ENCODE measurements at regions of chr3 and their contacts with region 1.

Region 1: DNA sequence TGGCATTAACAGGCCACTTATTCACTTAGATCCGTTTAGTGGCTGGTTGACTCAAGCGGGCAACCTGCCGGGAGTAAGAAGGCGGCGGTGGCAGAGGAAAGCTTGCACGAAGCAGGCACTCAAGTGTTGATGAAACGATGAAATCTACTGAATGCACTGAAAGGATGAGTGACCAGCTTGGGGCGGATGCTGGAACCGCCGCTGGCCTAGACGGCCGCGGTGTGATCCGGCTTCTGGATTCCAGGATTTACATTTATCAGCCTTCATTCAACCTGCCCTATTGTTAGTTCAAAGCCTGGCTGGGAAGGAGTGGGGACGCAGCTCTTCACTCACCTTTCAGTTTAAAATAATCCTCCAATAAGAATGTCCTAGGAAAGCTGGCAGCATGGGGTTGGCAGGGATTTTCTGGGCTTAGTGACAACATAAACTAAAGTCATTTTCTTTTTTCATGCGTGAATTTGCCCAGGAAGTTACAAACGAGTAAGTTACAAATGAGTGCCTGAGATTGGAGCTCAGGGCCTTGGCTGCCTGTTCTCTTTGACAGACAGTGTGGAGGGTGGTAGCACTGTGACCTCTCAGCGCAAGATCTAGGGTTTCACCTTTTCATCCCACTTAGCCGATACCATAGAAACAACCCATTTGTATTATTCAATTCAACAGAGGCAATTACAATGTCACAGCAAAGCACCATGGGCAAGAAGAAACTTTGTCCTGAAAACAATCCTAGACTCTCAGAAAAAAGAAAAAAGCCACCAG is 1.1 kb upstream of the PLCH1 start:
- DNase-seq: peak in 1 of 35 experiments; percentile 6
- ATAC-seq: peak in 1 of 4 experiments; percentile 31
- H3K4me3 ChIP-seq: no peak overlapping the region
- H3K4me3 Mint-ChIP-seq: peak overlapping the region; percentile 62 to 97 (median 86)
- H3K27ac ChIP-seq: no peak overlapping the region
- H3K27ac Mint-ChIP-seq: peak overlapping the region in 1 of 2 donors; percentile 23
- H3K4me1 ChIP-seq: peaks cover 0 to 24% of the 10 kb centered on the region in 2 experiments
- H3K4me1 Mint-ChIP-seq: peaks cover 20 to 30% (median 30%) of the 10 kb centered on the region in 3 donors
- H3K27me3 ChIP-seq: peaks cover 0 to 27% of the 10 kb centered on the region in 2 experiments
- H3K27me3 Mint-ChIP-seq: peaks cover 19 to 36% of the 10 kb centered on the region in 2 donors

Region 2: DNA sequence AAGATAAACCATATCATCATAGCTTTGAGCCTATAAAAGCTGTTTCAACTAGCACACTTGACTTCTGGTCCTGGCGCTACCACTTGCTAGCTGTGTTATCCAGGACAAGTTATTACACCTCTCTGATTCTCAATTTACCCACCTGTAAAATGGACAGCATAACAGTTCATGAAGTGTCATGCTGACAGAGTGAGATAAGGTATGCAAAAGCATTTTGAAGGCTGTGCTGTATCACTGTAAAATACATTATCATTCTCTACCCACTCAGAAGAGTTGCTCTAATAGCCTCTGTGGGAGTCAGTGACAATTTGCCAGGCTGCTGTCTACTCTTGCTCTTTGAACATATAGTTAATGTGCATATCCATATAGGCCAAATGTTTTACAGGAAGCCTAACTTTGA is 715.9 kb after region 1 on chr3:
- CTCF ChIA-PET with region 1: no interaction called
- POLR2A ChIA-PET with region 1: interaction called in 1 of 2 experiments, 10 read pairs
- DNase-seq: no peak
- ATAC-seq: no peak
- H3K4me3 ChIP-seq: no peak overlapping the region
- H3K4me3 Mint-ChIP-seq: no peak overlapping the region
- H3K27ac ChIP-seq: no peak overlapping the region
- H3K27ac Mint-ChIP-seq: no peak overlapping the region
- H3K4me1 ChIP-seq: no peaks in the 10 kb centered on the region
- H3K4me1 Mint-ChIP-seq: no peaks in the 10 kb centered on the region
- H3K27me3 ChIP-seq: no peaks in the 10 kb centered on the region
- H3K27me3 Mint-ChIP-seq: peaks cover 4 to 7% of the 10 kb centered on the region in 2 donors

Measured in T-cell (primary cell).